HepG2 (cell line): ENCODE measurements at regions of chr1 and their contacts with region 1.

Region 1: DNA sequence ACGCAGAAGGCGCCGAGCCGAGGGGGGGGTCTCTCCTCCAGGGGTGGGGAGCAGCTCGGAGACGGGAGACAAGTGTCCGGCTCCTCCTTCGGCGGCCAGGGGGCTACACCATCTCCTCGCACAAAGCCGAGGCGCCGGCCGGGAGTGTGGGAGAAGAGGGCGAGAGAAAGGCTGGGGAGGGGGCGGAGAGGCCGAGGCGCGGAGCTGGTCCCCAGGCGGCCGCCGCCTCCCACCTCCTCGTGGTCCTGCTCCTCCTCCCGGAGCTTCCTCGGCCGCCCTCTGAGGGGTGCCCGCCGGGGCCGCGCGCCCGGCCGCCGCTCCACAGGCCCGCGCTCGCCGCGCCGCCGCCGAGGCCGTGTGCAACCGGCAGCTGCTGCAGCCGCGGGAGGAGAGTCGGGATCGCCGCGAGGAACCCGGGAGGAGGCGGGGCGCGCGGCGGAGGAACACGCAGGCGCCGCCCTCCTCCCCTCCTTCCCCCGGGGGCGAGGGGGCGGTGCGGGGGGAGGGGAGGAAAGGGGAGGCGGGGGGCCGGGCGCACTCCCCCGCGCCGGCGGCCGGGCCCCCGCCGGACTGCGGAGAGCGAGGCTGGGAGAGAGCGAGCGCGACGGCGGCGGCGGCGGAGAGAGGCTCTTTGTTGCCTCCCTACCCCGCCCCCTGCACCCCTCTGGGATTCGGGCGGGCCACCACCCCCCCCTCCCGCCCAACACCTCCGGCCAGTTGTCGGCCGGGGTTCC is at the start of gene ENAH:
- DNase-seq: peak; percentile 49
- ATAC-seq: peak; percentile 80
- H3K4me3 ChIP-seq: peak within 1 kb of the TSS; percentile 86 to 98 (median 94)
- H3K27ac ChIP-seq: peak within 1 kb of the TSS; percentile 66
- H3K4me1 ChIP-seq: peaks cover 57% of the 10 kb centered on the region
- H3K27me3 ChIP-seq: no peaks in the 10 kb centered on the region; a peak in 1 of 5 replicates
- CTCF ChIP-seq: no peak
- EP300 ChIP-seq: no peak
- POLR2A ChIP-seq: peak in 1 of 2 experiments; percentile 60; a peak in 3 of 4 replicates
- RAD21 ChIP-seq: 0 out of 2 replicates have a peak, but pooled peaks have one; percentile 46
- total RNA-seq, gene ENAH: 58.3 and 60.2 TPM in 2 replicates

Region 2: DNA sequence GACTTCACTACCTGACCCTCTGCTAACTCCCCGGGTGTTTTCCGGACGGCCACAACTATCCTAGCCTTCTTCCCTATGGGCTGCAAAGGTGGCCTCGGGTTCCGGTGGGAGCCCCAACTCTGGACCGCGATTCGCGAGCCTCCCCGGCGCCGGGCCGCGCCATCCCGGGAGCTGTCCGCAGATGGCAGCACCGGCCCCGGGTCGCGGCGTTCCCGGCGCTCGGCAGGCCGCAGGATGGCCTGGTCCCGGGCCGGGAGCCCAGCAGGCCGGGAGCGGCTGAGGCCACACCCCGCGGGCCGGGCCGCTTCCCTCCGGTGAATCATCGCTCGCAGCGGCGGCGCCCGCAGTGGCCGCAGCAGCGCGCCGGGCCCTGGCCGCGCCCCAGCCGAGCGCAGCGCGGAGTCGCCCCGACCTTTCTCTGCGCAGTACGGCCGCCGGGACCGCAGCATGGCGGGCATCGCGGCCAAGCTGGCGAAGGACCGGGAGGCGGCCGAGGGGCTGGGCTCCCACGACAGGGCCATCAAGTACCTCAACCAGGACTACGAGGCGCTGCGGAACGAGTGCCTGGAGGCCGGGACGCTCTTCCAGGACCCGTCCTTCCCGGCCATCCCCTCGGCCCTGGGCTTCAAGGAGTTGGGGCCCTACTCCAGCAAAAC is 1940.6 kb before region 1 on chr1 and contains the start of gene CAPN2:
- CTCF ChIA-PET with region 1: no interaction called
- POLR2A ChIA-PET with region 1: no interaction called
- in situ Hi-C with region 1: no loop called
- intact Hi-C with region 1: no loop called
- DNase-seq: no peak
- ATAC-seq: peak; percentile 92
- H3K4me3 ChIP-seq: peak within 1 kb of the TSS; percentile 52 to 81 (median 68)
- H3K27ac ChIP-seq: no peak within 1 kb of the TSS
- H3K4me1 ChIP-seq: peaks cover 66% of the 10 kb centered on the region
- H3K27me3 ChIP-seq: peaks cover 5 to 55% of the 10 kb centered on the region in 2 experiments; a peak in 4 of 5 replicates
- CTCF ChIP-seq: peak; percentile 67
- EP300 ChIP-seq: no peak
- POLR2A ChIP-seq: no peak
- RAD21 ChIP-seq: peak; percentile 89
- total RNA-seq, gene CAPN2: 6.2 and 7.8 TPM in 2 replicates

Region 3: GRCh38 chr1:225554216-225554812 is 98.6 kb before region 1 on chr1:
- CTCF ChIA-PET with region 1: no interaction called
- POLR2A ChIA-PET with region 1: no interaction called
- in situ Hi-C with region 1: no loop called
- intact Hi-C with region 1: loop called (anchors 5 kb)
- DNase-seq: peak; percentile 12
- ATAC-seq: no peak
- H3K4me3 ChIP-seq: no peak overlapping the region
- H3K27ac ChIP-seq: no peak overlapping the region
- H3K4me1 ChIP-seq: no peaks in the 10 kb centered on the region
- H3K27me3 ChIP-seq: no peaks in the 10 kb centered on the region
- CTCF ChIP-seq: peak; percentile 46
- EP300 ChIP-seq: no peak
- POLR2A ChIP-seq: no peak
- RAD21 ChIP-seq: no peak

Region 4: GRCh38 chr1:225670806-225671733 is 18.2 kb after region 1 on chr1:
- CTCF ChIA-PET with region 1: no interaction called
- POLR2A ChIA-PET with region 1: interaction called, 17 read pairs
- in situ Hi-C with region 1: no loop called
- intact Hi-C with region 1: no loop called
- DNase-seq: peak; percentile 97
- ATAC-seq: peak; percentile 96
- H3K4me3 ChIP-seq: peak overlapping the region in 1 of 3 experiments; percentile 30; a peak in 1 of 6 replicates
- H3K27ac ChIP-seq: peak overlapping the region; percentile 63
- H3K4me1 ChIP-seq: peaks cover 27% of the 10 kb centered on the region
- H3K27me3 ChIP-seq: no peaks in the 10 kb centered on the region
- CTCF ChIP-seq: no peak
- EP300 ChIP-seq: peak; percentile 27 to 86; a peak in 3 of 4 replicates
- POLR2A ChIP-seq: peak in 1 of 2 experiments; percentile 35; a peak in 1 of 4 replicates
- RAD21 ChIP-seq: no peak

Region 5: DNA sequence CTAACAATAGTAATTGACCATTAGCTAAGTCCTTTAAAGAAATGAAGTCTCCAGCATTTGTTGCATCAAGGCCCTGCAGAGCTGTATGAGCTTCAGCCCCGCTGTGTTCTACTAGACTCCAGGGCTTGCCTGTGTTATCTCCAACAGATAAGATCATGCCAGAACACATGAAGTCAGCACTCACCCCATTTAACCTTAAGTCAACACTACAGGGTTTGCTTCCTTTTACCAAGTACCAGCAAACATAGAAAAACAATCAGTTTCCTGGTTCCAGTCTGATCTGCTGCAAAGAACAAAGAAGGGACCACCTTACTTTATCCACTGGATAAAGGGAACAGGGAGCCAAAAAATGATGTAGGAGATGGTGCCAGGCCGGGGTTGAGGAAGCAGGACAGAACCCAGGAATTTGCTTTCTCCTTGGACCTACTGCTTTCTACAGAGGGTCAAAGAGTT is 41.3 kb after region 1 on chr1:
- CTCF ChIA-PET with region 1: no interaction called
- POLR2A ChIA-PET with region 1: interaction called, 15 read pairs
- in situ Hi-C with region 1: no loop called
- intact Hi-C with region 1: loop called (anchors 5 kb)
- DNase-seq: peak; percentile 98
- ATAC-seq: peak; percentile 98
- H3K4me3 ChIP-seq: no peak overlapping the region
- H3K27ac ChIP-seq: peak overlapping the region; percentile 63
- H3K4me1 ChIP-seq: peaks cover 78% of the 10 kb centered on the region
- H3K27me3 ChIP-seq: no peaks in the 10 kb centered on the region
- CTCF ChIP-seq: no peak
- EP300 ChIP-seq: peak; percentile 46 to 89; a peak in 3 of 4 replicates
- POLR2A ChIP-seq: no peak
- RAD21 ChIP-seq: no peak